MCF 10A (cell line): ENCODE measurements at regions of chr3 and their contacts with region 1.

Region 1: DNA sequence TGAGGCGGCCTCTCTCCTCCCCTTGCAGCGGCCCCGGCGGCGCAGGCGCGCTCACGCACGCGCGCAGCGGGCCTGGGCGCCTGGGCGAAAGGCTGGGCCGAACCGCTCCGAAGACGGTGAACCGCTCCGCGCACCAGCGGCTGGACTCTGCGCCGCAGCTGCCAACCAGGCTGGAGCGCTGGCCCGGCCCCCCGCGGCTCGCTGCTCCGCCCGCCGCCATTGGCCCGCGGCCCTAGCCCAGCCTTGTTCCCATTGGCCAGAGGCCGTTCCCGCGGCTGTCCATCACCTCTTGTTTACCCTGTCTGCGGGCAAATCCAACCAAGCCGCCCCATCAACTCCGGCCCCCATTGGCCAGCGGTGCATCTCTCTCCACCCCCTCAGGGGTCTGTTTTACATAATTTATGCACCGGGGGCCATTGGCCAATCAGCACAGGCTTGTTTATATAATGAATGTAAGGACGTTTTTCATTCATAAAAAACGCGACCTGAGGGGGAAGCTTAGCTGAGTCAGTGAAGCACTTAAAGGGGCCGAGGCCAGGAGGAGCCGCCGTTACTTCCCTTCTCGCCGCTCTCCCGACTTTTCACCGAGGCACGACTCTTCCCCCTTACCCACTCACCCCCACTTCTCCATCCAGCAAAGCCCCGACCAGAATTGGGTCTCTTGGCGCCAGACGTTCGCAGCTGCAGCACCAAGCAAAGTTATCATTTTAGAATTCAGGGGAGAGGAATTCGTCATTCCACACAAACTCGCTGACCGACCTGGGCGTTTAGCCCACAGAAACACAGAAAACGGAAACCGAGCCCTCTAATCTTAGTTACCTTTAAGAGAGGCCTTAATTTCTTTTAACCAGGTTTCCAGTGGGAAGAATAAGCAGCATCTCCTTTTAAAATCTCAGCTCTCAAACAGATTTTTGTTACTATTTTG is at the start of gene ETV5:
- DNase-seq: peak; percentile 99
- H3K4me3 Mint-ChIP-seq: peak within 1 kb of the TSS; percentile 95
- H3K27ac Mint-ChIP-seq: peak within 1 kb of the TSS; percentile 90
- H3K4me1 Mint-ChIP-seq: peaks cover 25% of the 10 kb centered on the region
- H3K27me3 Mint-ChIP-seq: no peaks in the 10 kb centered on the region
- CTCF ChIP-seq: no peak
- total RNA-seq, gene ETV5: 93.0 and 101 TPM in 2 replicates

Region 2: DNA sequence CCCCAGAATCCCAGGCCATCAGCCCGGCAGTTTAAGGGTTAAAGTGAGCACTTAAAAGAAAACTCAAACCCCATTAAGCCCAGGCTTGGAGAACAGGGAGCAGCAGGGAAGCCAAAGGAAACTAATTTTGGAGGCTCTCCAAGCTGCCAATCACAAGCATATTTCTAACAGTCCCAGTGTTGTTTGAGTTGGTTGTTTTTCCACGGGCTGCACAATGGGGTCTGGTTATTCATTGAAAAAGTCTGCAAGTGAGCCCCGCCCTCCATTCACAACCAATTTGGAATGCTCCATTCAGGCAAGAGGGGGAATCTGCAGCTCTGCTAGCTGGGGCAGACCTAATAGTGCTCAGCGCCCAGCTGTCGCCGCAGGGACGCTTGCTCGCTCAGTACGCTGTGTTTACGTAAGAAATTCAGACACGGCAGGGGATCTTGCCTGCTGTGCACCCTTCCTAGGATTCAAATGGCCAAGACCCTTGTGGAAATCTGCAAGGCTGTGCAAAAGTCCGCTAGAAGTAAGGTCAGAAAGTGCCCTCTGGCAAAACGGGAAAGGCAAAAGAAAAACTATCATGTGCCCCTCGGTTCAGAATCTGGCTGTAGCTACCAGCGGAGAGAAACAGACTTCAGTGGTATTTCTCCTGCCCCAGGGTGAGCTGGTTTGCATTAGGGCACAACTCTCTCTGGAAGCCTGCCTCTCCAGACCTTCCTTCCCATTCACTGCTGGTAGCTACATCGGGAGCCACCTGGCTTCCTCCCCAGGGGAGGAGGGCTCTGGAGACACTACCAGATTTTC is 11.3 kb before region 1 on chr3:
- CTCF ChIA-PET with region 1: no interaction called
- POLR2A ChIA-PET with region 1: interaction called, 25 read pairs
- intact Hi-C with region 1: no loop called
- DNase-seq: peak; percentile 76
- H3K4me3 Mint-ChIP-seq: peak overlapping the region; percentile 66
- H3K27ac Mint-ChIP-seq: no peak overlapping the region
- H3K4me1 Mint-ChIP-seq: peaks cover 34% of the 10 kb centered on the region
- H3K27me3 Mint-ChIP-seq: no peaks in the 10 kb centered on the region
- CTCF ChIP-seq: no peak

Region 3: DNA sequence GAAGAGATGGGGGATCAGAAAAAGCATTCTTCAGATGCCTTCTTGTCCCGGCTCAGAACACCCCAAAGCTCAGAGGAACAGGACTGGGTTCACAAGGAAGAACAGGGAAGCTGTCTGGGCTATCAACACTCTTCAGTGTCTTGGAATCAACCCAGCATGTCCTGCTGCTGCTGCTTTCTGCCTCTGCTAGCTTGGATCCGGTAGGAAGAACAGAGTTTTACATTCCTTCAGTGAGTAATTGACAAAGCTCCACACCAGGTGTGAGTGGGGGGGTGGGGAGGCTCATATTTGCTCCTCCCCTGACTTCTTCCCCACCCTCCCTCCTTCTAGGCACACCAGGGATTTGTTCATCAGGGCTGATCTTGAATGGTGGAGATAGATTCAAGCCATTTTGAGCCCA is 12.8 kb after region 1 on chr3:
- CTCF ChIA-PET with region 1: interaction called, 3 read pairs
- POLR2A ChIA-PET with region 1: interaction called, 13 read pairs
- intact Hi-C with region 1: no loop called
- DNase-seq: peak; percentile 30
- H3K4me3 Mint-ChIP-seq: no peak overlapping the region
- H3K27ac Mint-ChIP-seq: peak overlapping the region; percentile 35
- H3K4me1 Mint-ChIP-seq: peaks cover 9% of the 10 kb centered on the region
- H3K27me3 Mint-ChIP-seq: peaks cover 30% of the 10 kb centered on the region
- CTCF ChIP-seq: no peak

Region 4: GRCh38 chr3:186144257-186144656 is 35.1 kb after region 1 on chr3:
- CTCF ChIA-PET with region 1: no interaction called
- POLR2A ChIA-PET with region 1: no interaction called
- intact Hi-C with region 1: no loop called
- DNase-seq: no peak
- H3K4me3 Mint-ChIP-seq: no peak overlapping the region
- H3K27ac Mint-ChIP-seq: no peak overlapping the region
- H3K4me1 Mint-ChIP-seq: no peaks in the 10 kb centered on the region
- H3K27me3 Mint-ChIP-seq: peaks cover 23% of the 10 kb centered on the region
- CTCF ChIP-seq: no peak